ENCODE measurements at regions of chr17 and their contacts with region 1.

Region 1: DNA sequence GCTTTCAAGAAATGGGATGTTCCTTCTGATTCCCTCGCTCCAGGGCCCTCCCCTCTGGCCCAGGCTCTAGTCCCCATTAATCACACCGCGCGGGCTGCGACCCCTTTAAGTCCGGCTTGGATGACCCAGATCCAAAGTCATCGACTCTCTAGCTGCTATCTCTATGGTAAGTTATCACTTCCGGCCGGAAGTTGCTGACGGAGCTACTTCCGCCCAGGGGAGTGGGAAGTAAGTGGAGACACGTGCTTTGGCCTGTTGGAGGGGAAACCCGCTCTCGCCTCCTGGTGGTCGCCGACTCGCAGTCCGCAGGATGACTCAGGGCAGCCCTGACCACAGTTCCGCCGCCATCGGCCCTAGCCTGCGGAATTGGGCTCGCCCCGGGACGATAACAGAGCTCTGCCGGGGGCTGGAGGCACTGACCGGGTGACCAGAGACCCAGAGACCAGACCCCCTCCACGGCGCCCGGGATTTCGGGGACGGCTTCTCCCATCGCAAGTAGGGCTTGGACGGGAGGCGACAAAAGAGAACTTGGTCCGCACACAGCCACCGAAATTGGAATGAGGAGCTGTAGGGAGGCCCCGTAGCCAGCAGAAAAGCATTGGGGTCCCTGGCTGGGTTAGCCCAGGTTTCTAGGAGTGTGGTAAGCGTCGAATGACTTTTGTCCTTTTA is 52.2 kb upstream of the SEC14L1 start:
- DNase-seq: peak; percentile 99
- ATAC-seq: peak; percentile 91 to 96
- H3K4me3 ChIP-seq: peak overlapping the region; percentile 99
- H3K27ac ChIP-seq: peak overlapping the region; percentile 96 to 100
- H3K4me1 ChIP-seq: peaks cover 28% of the 10 kb centered on the region
- CTCF ChIP-seq: peak; percentile 73
- EP300 ChIP-seq: no peak
- POLR2A ChIP-seq: peak; percentile 88
- RAD21 ChIP-seq: peak; percentile 46 to 67

Region 2: GRCh38 chr17:77076124-77076872 is 12.3 kb before region 1 on chr17:
- CTCF ChIA-PET with region 1: interaction called, 64 read pairs
- POLR2A ChIA-PET with region 1: interaction called, 3 read pairs
- DNase-seq: no peak
- ATAC-seq: peak in 1 of 2 experiments; percentile 51; a peak in 2 of 6 replicates
- H3K4me3 ChIP-seq: no peak overlapping the region
- H3K27ac ChIP-seq: no peak overlapping the region
- H3K4me1 ChIP-seq: no peaks in the 10 kb centered on the region
- CTCF ChIP-seq: no peak
- EP300 ChIP-seq: no peak
- POLR2A ChIP-seq: no peak
- RAD21 ChIP-seq: no peak

Region 3: GRCh38 chr17:77120868-77121267 is 32.3 kb after region 1 on chr17:
- CTCF ChIA-PET with region 1: interaction called, 121 read pairs
- POLR2A ChIA-PET with region 1: interaction called, 8 read pairs
- DNase-seq: no peak
- ATAC-seq: no peak
- H3K4me3 ChIP-seq: no peak overlapping the region
- H3K27ac ChIP-seq: peak overlapping the region; percentile 70 to 81
- H3K4me1 ChIP-seq: peaks cover 50% of the 10 kb centered on the region
- CTCF ChIP-seq: no peak
- EP300 ChIP-seq: no peak
- POLR2A ChIP-seq: no peak
- RAD21 ChIP-seq: no peak

Region 4: DNA sequence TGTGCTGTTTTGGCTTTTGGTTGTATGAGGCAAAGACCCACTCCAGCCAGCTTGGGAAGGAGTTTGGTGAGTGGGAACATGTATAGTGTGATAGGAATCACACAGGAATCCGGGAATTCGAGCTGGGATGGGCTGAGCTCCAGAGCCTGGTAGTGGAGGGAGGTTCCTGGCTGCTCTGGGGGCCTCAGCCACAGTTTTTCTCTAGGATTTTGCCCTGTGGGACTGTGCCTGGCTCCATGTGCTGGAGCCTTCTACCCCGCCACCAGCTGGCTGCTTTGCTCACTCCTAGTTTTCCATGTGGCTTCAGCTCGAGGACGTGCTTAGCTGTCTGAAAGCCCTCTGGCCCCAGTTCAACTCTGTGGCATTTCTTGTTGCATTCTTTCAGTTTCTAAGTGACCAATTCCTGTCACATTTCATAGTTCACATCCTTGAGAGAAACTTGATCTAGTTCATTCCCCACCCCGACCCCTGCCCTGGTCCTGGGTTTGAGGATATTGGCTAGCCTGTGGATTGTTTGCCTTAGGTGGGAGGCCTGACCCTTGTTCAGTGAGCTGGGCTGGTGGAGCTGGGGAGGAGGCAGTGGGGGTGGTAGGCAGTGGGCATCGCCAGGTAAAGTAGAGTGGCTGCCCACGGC is 57.1 kb after region 1 on chr17:
- CTCF ChIA-PET with region 1: interaction called, 10 read pairs
- POLR2A ChIA-PET with region 1: interaction called, 18 read pairs
- DNase-seq: no peak
- ATAC-seq: peak in 1 of 2 experiments; percentile 48; a peak in 3 of 6 replicates
- H3K4me3 ChIP-seq: no peak overlapping the region
- H3K27ac ChIP-seq: peak overlapping the region in 1 of 2 experiments; percentile 37; a peak in 2 of 6 replicates
- H3K4me1 ChIP-seq: peaks cover 19% of the 10 kb centered on the region
- CTCF ChIP-seq: no peak
- EP300 ChIP-seq: no peak
- POLR2A ChIP-seq: no peak
- RAD21 ChIP-seq: no peak

Region 5: GRCh38 chr17:77214743-77215142 is 126.2 kb after region 1 on chr17:
- CTCF ChIA-PET with region 1: interaction called, 40 read pairs
- POLR2A ChIA-PET with region 1: no interaction called
- DNase-seq: peak; percentile 73 to 79
- ATAC-seq: peak; percentile 86 to 94
- H3K4me3 ChIP-seq: no peak overlapping the region
- H3K27ac ChIP-seq: no peak overlapping the region
- H3K4me1 ChIP-seq: no peaks in the 10 kb centered on the region
- CTCF ChIP-seq: peak; percentile 69
- EP300 ChIP-seq: no peak
- POLR2A ChIP-seq: no peak
- RAD21 ChIP-seq: peak; percentile 63 to 81

Region 6: GRCh38 chr17:77254951-77255825 is 166.6 kb after region 1 on chr17:
- CTCF ChIA-PET with region 1: interaction called, 94 read pairs
- POLR2A ChIA-PET with region 1: interaction called, 5 read pairs
- DNase-seq: peak; percentile 87 to 93
- ATAC-seq: peak; percentile 82 to 86
- H3K4me3 ChIP-seq: no peak overlapping the region
- H3K27ac ChIP-seq: peak overlapping the region; percentile 80 to 88
- H3K4me1 ChIP-seq: peaks cover 36% of the 10 kb centered on the region
- CTCF ChIP-seq: no peak; the same call in 2 of the 3 replicates
- EP300 ChIP-seq: peak in 1 of 2 experiments; percentile 52; a peak in 1 of 5 replicates
- POLR2A ChIP-seq: no peak
- RAD21 ChIP-seq: peak in 1 of 2 experiments; percentile 34; a peak in 4 of 5 replicates

Region 7: DNA sequence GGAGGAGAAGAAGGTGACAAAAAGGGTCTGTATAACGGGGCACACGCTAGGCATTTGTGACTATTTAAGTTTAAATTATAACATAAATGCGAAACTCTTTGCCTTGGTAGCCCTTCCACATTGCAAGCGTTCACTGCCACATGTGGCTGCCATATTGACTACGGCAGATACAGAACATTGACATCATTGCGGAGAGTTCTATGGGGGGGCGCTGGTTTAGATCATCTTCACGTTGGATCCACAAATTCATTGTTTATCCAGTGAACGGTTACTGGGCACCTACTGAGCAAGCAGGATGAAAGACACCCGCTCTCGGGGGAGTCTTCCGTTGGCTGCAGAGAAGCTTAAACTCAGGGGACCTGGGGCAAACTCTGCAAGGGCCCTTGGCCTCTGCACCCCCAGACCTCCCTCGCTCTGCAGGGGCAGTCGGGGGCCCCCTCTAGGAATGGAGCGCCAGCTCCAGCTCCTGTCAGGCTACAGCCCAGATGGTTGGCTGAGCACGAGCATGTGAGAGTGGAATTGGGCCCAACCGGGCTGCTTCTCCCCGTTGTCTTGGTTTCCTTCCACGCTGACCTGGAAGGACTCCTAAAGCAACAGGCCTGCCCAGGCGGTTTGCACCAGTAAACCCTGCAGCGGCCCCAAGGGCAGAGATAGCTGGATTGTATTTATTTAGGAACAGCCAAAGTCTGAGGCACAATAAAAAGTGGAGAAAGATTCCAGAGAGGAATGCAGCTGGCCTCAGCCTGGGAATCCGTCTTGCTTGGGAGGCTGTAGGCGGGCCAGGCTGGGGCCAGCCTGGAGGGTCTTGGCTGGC is 224.4 kb after region 1 on chr17:
- CTCF ChIA-PET with region 1: no interaction called
- POLR2A ChIA-PET with region 1: no interaction called
- DNase-seq: no peak
- ATAC-seq: no peak
- H3K4me3 ChIP-seq: no peak overlapping the region
- H3K27ac ChIP-seq: peak overlapping the region in 1 of 2 experiments; percentile 26; a peak in 1 of 6 replicates
- H3K4me1 ChIP-seq: peaks cover 51% of the 10 kb centered on the region
- CTCF ChIP-seq: no peak
- EP300 ChIP-seq: no peak
- POLR2A ChIP-seq: no peak
- RAD21 ChIP-seq: no peak

Measured in A549 (cell line).